Activated naive CD4-positive, alpha-beta T cell treated with anti-CD3 and anti-CD28 coated beads for 36 hours (primary cell): ENCODE measurements at regions of chr6 and their contacts with region 1.

Region 1: DNA sequence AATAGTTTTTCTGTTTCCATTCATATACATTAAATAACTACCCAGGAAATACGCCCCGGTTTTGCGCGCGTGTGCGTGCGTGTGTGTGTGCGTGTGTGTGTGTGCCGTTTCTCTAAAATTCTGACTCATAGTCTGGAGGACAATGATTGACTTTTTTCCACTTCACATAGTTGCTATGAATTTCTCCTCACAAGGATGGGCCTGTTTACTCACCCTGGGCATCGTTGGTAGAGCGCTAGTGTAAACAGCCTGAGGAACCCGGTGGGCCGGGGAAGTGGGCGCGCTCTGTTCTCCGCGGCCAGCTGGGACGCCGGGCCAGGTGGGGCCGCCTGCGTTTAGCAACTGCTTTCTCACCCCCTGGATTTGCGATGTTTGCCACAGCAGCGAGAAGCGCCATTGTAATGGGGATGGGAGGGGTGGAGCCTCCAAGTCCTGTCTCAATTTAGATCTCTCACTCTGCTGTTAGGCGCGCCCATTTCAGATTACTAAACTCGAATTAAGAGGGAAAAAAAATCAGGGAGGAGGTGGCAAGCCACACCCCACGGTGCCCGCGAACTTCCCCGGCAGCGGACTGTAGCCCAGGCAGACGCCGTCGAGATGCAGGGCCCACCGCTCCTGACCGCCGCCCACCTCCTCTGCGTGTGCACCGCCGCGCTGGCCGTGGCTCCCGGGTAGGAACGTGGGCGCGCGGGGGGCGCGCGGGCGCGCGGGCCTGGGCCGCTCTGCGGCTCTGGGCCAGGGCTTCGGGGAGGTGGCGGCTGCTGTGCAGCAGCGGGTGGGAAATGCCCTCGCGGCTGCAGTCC is at the start of gene CD109:
- DNase-seq: peak; percentile 89
- H3K4me3 Mint-ChIP-seq: peak within 1 kb of the TSS; percentile 92
- H3K27ac Mint-ChIP-seq: peak within 1 kb of the TSS; percentile 96
- H3K4me1 Mint-ChIP-seq: peaks cover 44% of the 10 kb centered on the region
- H3K27me3 Mint-ChIP-seq: peaks cover 9% of the 10 kb centered on the region
- total RNA-seq, gene CD109: 6.7 to 7.6 TPM

Region 2: DNA sequence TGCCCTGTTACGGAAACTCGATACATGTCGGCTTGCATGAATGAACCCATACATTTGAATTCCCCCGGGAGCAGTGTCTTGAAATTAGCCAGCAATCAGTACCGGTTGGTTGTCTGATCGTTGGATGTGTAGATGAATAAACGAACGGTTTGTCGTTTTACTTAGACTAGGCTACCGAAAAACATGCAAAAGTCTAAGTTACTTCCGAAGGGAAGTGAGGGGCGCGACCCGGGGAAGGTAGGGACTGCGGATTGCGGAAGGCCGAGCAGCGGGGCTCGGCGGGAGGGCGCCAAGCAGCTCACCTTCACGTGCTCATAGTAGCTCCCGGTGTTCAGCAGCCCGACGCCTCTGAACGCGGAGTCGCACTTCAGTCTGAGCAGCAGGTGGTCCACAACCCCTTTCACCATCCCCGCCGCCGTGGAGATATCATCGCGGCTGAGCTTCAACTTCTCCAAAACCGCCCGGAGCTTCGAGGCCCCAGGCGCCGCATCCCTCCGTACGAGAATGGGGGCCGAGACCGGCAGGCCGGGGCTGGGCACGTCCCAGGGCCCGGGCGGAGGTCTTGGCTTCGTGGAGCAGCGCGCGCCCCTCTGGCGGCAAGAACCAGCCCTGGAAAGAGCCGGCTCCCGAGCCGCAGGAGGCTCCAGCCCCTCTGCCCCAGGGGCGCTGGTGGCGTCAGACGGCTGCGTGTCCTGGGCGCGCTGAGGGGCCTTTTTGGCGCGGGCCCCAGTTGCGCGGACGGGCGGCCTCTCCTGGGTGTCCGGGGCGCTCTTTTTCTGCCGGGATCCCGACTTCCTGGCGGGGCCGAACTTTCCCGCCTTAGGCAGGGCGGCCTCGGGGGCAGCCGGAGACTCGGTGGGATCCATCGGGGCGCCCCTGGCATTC is 244.4 kb before region 1 on chr6:
- CTCF ChIA-PET with region 1: no interaction called
- intact Hi-C with region 1: loop called (anchors 2 kb)
- DNase-seq: peak; percentile 60
- H3K4me3 Mint-ChIP-seq: peak overlapping the region; percentile 90
- H3K27ac Mint-ChIP-seq: peak overlapping the region; percentile 86
- H3K4me1 Mint-ChIP-seq: peaks cover 35% of the 10 kb centered on the region
- H3K27me3 Mint-ChIP-seq: no peaks in the 10 kb centered on the region

Region 3: DNA sequence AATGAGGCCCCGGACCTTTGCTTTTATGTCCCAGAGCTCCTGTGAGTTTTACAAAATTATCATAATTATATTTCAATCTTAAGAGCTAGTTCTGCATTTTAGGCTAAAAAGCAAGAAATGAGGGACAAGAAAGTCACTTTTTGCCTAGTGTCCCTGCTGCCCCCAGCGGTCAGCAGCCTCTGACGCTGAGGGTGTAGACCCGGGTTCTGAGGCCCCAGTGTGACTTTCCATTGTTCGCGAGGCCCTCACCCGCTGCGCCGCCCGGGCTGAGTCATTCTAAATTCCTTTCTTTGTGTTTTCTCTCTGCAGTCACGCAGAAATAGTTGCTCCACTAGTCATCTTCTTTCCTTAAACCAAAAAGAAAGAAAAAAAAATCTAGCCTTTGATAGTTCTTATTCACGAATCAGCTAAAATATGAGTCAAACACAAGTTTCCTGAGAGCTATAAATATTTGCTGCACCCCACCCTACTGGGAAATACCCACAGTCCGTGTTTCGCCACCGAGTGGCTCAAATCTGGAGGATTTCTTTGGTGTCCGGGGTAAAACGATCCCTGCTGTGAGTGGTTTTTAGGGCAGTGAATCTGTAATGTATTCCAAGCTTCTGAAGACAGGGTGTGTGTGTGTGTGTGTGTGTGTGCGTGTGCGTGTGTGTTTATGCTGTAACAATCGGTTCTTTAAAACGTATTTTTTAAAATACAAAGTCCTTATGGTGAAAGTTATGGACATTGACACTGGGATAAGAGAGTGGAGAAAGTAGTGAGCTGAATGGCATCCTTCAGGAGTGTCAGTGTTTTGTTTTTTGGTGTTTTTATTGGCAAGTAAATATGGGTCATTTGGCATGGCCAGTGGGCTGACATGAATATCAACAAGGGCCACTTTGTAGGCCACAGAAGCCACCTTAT is 115.3 kb before region 1 on chr6:
- CTCF ChIA-PET with region 1: no interaction called
- intact Hi-C with region 1: loop called (anchors 2 kb)
- DNase-seq: peak; percentile 90
- H3K4me3 Mint-ChIP-seq: peak overlapping the region; percentile 76
- H3K27ac Mint-ChIP-seq: peak overlapping the region; percentile 99
- H3K4me1 Mint-ChIP-seq: peaks cover 28% of the 10 kb centered on the region
- H3K27me3 Mint-ChIP-seq: no peaks in the 10 kb centered on the region

Region 4: GRCh38 chr6:73675466-73676098 is 20.2 kb before region 1 on chr6:
- CTCF ChIA-PET with region 1: interaction called, 7 read pairs
- intact Hi-C with region 1: loop called (anchors 1 kb)
- DNase-seq: peak; percentile 87
- H3K4me3 Mint-ChIP-seq: no peak overlapping the region
- H3K27ac Mint-ChIP-seq: no peak overlapping the region
- H3K4me1 Mint-ChIP-seq: no peaks in the 10 kb centered on the region
- H3K27me3 Mint-ChIP-seq: peaks cover 8% of the 10 kb centered on the region

Region 5: DNA sequence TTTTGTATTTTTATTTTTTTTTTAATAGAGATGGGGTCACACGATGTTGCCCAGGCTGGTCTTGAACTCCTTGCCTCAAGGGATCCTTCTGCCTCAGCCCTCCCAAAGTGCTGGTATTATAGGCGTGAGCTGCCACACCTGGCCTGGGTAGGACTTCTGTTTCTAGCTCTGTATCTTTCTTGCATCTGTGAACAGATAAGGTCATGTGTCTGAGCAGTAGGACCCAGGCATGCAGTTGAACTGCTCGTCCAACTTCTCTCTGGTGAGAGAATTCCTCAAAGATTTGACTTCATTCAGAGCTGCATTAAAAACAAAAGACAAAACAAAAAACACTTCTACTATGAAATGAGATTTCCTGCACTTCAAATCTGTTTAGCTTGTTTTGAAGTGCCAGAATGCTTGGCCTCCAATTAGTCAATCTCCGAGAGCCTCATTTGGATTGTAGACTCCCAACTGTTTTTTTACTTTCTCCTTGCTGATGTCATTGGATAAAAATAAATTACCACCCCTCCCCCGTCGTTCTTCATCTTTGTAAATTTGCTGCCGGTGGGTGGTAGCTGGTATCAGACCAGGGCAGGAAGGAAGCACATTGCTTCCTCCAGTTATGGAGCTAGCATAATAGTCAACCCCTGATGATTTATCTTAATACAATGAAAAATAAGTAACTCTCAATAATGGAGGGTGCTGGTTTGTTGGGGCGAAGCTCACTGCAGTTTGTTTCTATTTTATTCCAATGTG is 17.8 kb after region 1 on chr6:
- CTCF ChIA-PET with region 1: interaction called, 4 read pairs
- intact Hi-C with region 1: loop called (anchors 1 kb)
- DNase-seq: no peak
- H3K4me3 Mint-ChIP-seq: no peak overlapping the region
- H3K27ac Mint-ChIP-seq: no peak overlapping the region
- H3K4me1 Mint-ChIP-seq: peaks cover 26% of the 10 kb centered on the region
- H3K27me3 Mint-ChIP-seq: no peaks in the 10 kb centered on the region

Region 6: DNA sequence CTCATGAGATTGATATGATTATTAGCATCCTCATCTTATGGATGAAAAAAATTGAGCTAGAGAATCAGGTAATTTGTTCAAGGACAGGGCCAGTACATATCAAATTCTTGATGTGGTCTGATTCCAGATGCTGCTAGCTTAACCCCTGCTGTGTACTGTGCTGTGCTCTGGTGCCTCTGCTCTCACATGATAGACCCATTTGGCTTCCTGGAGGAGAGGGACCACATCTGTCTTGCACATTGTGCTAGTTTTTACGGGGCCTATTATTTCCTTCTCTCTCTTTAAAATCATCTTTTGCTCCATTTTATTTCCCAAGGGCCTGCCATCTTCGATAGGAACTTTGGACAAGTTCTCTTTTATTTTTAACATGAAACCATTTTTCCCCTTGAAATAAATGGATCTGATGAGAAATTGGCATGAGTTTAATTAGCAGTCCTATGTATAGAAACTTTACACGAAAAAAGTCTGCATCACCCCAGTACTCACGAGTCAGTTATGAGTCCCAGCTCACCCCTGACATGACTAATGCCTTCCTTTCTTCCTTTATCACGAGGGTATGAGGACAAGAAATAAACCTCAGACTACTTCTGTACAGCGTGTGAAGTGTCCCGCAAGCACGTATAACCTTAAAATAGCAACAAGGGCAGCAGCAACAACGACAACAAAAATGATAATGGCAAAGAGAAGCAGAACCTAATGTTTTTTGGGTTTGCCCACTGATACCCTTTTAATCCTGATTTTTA is 26.7 kb after region 1 on chr6:
- CTCF ChIA-PET with region 1: interaction called, 4 read pairs
- intact Hi-C with region 1: loop called (anchors 1 kb)
- DNase-seq: peak; percentile 55
- H3K4me3 Mint-ChIP-seq: no peak overlapping the region
- H3K27ac Mint-ChIP-seq: peak overlapping the region; percentile 15
- H3K4me1 Mint-ChIP-seq: peaks cover 27% of the 10 kb centered on the region
- H3K27me3 Mint-ChIP-seq: no peaks in the 10 kb centered on the region

Region 7: GRCh38 chr6:75243333-75244062 is 1547.7 kb after region 1 on chr6 and contains the start of gene COX7A2:
- CTCF ChIA-PET with region 1: no interaction called
- intact Hi-C with region 1: loop called (anchors 1 kb)
- DNase-seq: peak; percentile 92
- H3K4me3 Mint-ChIP-seq: peak within 1 kb of the TSS; percentile 98
- H3K27ac Mint-ChIP-seq: peak within 1 kb of the TSS; percentile 100
- H3K4me1 Mint-ChIP-seq: peaks cover 32% of the 10 kb centered on the region
- H3K27me3 Mint-ChIP-seq: peaks cover 12% of the 10 kb centered on the region
- total RNA-seq, gene COX7A2: 577 to 592 TPM